ENCODE measurements at regions of chr1 and their contacts with region 1.

Region 1: DNA sequence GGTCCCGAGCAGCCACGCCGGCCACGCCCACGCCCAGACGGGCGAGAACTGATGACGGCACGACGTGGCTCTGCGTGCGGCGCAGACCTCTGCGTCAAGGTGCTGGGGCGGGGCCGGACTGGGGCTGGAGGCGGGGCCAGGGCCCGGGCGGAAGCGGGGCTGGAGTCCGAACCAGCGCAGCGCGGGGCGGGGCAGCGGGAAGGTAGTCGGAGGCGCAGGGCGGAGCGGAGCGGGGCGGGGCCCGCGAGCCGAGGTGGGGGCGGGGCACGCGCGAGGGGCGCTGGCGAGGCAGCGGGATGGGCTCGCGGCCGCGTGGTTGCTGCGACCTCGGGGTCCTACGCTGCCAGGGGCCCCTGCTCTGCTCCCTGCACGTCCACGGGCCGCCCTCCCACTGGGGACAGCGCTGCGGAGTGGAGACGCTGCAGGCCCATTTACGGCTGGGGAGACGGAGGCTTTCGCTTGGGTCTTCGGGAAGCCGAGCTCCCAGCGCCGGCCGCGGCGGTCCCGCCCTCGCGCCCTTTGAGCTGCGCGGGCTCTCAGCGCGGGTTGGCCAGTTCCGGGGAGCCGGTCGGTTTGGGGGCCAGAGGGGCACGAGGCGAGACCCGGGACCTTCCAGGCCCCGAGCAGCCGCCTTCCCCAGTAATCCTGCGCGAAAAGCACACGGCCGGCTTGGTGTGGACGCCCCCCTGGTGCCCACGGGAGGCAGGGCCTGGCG is at the start of gene PEX10:
- DNase-seq: peak; percentile 99
- ATAC-seq: peak; percentile 88
- H3K4me3 Mint-ChIP-seq: peak within 1 kb of the TSS; percentile 81
- H3K27ac Mint-ChIP-seq: peak within 1 kb of the TSS; percentile 95
- H3K4me1 Mint-ChIP-seq: peaks cover 43% of the 10 kb centered on the region
- H3K27me3 Mint-ChIP-seq: no peaks in the 10 kb centered on the region
- total RNA-seq, gene PEX10: 8.7 to 12.3 TPM

Region 2: GRCh38 chr1:2300851-2301606 is 111.6 kb before region 1 on chr1:
- CTCF ChIA-PET with region 1: no interaction called
- DNase-seq: peak; percentile 94
- ATAC-seq: peak; percentile 77
- H3K4me3 Mint-ChIP-seq: peak overlapping the region; percentile 74
- H3K27ac Mint-ChIP-seq: peak overlapping the region; percentile 97
- H3K4me1 Mint-ChIP-seq: peaks cover 41% of the 10 kb centered on the region
- H3K27me3 Mint-ChIP-seq: no peaks in the 10 kb centered on the region

Region 3: DNA sequence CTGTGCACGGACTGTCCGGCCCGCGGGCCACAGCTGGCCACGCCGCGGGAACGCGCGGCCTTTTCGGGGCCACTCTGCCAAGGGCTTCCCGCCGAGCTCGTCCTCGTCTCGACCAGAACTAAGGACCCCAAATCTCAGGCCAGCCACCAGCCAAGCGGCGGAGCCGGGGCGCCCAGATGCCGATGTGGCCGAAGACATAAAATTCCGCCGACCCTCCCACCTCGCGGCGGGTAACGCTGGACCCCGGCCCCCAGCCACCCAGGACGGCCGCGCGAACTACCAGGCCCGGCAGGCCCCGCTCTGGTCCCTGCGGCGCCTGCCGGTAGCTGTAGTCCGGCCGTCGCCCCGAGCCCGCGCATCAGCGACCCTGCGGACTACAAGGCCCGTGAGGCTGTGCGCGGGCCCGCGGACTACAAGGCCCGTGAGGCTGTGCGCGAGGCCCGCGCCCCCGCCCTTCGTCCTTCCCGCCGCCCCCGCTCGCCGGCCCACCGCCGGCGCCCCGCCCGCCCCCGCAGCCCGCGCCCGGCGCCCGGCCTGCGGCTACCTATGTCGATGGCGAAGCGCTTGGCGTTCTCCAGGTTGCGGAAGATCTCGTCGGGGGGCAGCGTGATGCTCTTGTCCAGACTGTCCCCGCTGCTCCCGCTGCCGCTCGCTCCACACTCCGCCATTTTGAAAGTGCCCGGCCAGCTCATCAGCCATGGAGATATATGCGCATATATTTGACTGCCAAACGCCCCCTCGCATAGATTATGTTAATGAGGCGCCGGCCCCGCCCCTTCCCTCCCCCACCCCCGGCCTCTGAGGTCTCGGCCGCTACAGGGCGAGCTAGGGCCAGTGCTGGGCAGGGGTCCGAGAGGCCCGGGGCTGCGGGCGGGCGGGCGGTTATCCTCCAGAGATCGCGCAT is 113.5 kb after region 1 on chr1 and contains the start of gene PANK4:
- CTCF ChIA-PET with region 1: interaction called, 58 read pairs
- DNase-seq: peak; percentile 94
- ATAC-seq: peak; percentile 88
- H3K4me3 Mint-ChIP-seq: peak within 1 kb of the TSS; percentile 73
- H3K27ac Mint-ChIP-seq: peak within 1 kb of the TSS; percentile 88
- H3K4me1 Mint-ChIP-seq: peaks cover 39% of the 10 kb centered on the region
- H3K27me3 Mint-ChIP-seq: peaks cover 15% of the 10 kb centered on the region
- total RNA-seq, gene PANK4: 72.2 to 91.2 TPM

Region 4: GRCh38 chr1:2556277-2556677 is 143.6 kb after region 1 on chr1 and contains the start of gene TNFRSF14:
- CTCF ChIA-PET with region 1: interaction called, 23 read pairs
- DNase-seq: peak; percentile 91
- ATAC-seq: peak; percentile 72
- H3K4me3 Mint-ChIP-seq: peak within 1 kb of the TSS; percentile 98
- H3K27ac Mint-ChIP-seq: peak within 1 kb of the TSS; percentile 99
- H3K4me1 Mint-ChIP-seq: peaks cover 33% of the 10 kb centered on the region
- H3K27me3 Mint-ChIP-seq: no peaks in the 10 kb centered on the region
- total RNA-seq, gene TNFRSF14: 106 to 111 TPM

Region 5: DNA sequence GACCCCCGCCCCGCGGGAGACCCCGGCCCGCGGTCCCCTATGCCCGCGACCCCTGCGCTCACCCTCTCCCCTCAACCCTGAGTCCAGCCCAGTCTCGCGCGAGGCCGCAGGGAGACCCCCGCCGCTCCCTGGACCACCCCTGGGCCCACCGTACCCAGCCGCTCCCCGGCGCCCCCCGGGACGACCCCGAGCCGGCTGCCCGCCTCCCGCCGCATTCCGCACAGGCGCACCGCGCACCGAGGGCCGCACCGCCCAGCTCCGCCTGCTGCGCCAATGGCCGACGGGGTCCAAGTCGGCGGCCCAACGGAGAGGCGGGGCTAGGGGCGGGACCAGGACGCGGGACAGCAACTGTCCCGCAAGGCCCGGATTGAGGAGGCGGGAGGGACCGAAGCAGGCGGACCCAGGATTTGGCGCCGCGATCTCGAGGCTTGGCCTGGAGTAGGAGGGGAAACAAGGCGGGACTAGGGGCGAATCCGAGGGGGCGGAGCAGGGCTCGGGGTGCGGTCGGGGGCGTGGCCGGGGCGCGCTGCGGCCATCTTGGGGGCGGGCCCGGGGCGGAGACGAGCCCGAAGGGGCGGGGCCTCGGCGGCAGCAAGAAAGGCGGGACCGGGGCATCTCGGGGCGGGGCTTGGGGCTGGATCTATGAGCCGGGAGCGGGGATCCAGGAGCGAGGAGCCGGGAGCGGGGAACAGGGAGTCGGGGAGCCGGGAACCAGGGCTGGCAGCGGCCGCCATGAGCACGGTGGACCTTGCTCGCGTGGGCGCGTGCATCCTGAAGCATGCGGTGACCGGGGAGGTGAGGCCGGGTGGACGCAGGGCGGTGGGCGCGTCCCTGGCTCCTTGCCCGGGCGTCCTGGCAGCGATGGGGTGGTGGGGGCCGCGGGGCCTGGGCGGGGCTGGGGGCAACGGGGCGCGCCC is 173.7 kb after region 1 on chr1 and contains the start of gene PRXL2B:
- CTCF ChIA-PET with region 1: interaction called, 31 read pairs
- DNase-seq: peak; percentile 99
- ATAC-seq: peak; percentile 82
- H3K4me3 Mint-ChIP-seq: peak within 1 kb of the TSS; percentile 82
- H3K27ac Mint-ChIP-seq: peak within 1 kb of the TSS; percentile 93
- H3K4me1 Mint-ChIP-seq: peaks cover 35% of the 10 kb centered on the region
- H3K27me3 Mint-ChIP-seq: no peaks in the 10 kb centered on the region
- total RNA-seq, gene PRXL2B: 22.4 to 26.2 TPM

Region 6: DNA sequence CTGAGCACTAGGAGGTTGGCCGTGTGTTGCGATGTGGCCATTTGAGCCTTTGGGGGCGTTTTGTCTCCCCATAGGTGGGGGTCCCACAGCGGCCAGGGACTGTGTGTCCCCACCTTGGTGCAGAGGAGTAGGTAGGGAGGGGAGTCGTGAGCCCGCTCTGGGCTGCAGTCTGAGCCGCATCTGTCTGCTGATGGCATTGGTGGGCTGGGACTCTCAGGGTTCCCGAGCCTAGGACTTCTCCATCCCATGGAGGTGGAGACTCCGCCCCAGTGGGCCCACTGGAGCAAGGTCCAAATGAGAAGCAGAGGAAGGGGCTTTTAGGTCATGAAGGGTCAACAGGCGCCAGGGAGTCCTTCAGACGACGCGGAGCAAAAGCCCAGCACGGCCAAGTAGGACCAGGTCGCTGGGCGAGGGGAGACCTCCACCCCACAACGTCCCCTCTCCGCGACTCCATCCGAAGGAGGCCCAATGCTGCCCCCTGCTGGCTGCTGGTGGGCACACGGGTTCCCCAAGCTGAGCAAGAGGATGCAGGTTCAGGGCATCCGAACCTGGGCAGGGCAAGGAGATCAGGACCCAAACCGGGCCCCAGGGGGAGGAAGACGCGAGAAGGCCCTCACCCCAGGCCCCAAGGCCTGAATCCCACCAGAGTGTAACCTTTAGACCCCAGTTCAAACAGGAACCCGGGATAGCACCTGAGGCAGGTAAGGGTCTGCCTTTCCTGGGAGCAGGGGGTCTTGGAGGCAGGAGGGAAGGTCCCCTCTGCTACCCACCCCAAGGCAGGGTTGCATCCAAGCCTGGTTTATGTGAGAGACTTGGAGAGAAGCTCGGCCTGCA is 373.9 kb after region 1 on chr1:
- CTCF ChIA-PET with region 1: interaction called, 11 read pairs
- DNase-seq: peak; percentile 74
- ATAC-seq: peak; percentile 69
- H3K4me3 Mint-ChIP-seq: no peak overlapping the region
- H3K27ac Mint-ChIP-seq: no peak overlapping the region
- H3K4me1 Mint-ChIP-seq: peaks cover 6% of the 10 kb centered on the region
- H3K27me3 Mint-ChIP-seq: peaks cover 35% of the 10 kb centered on the region

Region 7: DNA sequence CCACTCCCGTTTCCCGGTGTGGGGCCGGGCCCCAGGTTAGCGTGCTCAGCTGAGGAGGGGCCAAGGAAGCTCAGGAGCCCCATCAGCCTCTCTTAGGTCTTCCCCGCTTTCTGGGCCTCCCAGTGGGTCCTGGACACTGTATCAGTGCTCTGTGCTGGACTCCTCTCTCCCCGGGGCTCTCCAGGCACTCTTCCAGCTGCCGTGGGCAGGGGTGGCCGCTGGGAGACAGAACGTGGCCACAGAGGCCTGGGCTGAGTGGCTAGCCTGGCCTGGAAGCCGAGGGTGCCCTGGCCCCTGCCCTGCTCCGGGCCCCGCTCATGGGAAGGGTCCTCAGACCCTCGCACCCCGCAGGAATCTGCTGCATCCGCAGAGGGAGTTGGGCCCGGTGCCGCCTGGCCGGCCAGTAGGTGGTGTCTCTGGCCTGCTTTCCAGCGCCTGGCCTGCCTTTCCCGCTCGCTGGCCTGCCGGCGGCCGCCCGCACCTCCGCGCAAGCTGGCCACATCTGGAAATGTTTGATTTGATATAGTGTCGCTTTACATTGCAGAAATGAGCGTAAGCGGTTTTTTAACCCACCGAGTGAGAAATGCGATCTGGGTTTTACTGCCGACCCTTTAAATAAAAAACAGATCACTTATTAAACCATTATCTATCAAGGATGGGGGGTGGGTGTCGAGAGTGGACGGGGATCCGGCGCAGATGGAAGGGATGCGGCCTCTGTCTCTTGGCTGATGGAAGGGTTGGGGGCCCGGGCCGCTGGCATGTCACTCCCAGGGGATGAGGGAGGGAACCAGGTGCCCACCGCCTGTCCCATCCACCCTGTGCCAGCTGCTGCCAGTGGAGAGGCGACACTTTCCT is 463.3 kb after region 1 on chr1:
- CTCF ChIA-PET with region 1: no interaction called
- DNase-seq: no peak
- ATAC-seq: no peak
- H3K4me3 Mint-ChIP-seq: no peak overlapping the region
- H3K27ac Mint-ChIP-seq: no peak overlapping the region
- H3K4me1 Mint-ChIP-seq: no peaks in the 10 kb centered on the region
- H3K27me3 Mint-ChIP-seq: no peaks in the 10 kb centered on the region

Measured in activated CD8-positive, alpha-beta memory T cell treated with anti-CD3 and anti-CD28 coated beads, Interleukin-2, amount 10 ng/mL, durations not matched to agents 7 days and 5 days (primary cell).